H1 (cell line): ENCODE measurements at regions of chr1 and their contacts with region 1.

Region 1: DNA sequence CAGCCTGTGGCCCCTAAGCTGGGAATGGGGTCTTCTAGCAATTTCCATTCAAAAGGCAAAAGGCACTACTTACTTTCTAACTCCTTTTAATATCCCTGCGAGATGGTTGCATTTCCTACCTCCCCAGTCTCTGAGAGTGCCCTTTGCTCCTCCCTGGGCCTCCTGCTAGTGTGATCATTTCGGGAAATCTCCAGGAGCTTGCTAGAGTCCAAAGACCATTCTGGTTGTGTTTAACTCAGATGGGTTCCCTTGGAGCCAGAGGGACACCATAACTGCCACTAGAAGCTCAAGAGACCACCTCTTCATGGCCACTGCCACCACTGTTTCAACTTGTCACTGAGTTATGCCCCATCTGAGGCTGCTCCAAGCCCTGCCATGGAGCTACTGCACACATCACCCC is 34.4 kb upstream of the CYP4B1 start:
- DNase-seq: no peak
- H3K4me3 ChIP-seq: no peak overlapping the region
- H3K27ac ChIP-seq: no peak overlapping the region
- H3K4me1 ChIP-seq: no peaks in the 10 kb centered on the region
- H3K27me3 ChIP-seq: no peaks in the 10 kb centered on the region
- CTCF ChIP-seq: no peak
- EP300 ChIP-seq: no peak
- POLR2A ChIP-seq: no peak
- RAD21 ChIP-seq: no peak

Region 2: DNA sequence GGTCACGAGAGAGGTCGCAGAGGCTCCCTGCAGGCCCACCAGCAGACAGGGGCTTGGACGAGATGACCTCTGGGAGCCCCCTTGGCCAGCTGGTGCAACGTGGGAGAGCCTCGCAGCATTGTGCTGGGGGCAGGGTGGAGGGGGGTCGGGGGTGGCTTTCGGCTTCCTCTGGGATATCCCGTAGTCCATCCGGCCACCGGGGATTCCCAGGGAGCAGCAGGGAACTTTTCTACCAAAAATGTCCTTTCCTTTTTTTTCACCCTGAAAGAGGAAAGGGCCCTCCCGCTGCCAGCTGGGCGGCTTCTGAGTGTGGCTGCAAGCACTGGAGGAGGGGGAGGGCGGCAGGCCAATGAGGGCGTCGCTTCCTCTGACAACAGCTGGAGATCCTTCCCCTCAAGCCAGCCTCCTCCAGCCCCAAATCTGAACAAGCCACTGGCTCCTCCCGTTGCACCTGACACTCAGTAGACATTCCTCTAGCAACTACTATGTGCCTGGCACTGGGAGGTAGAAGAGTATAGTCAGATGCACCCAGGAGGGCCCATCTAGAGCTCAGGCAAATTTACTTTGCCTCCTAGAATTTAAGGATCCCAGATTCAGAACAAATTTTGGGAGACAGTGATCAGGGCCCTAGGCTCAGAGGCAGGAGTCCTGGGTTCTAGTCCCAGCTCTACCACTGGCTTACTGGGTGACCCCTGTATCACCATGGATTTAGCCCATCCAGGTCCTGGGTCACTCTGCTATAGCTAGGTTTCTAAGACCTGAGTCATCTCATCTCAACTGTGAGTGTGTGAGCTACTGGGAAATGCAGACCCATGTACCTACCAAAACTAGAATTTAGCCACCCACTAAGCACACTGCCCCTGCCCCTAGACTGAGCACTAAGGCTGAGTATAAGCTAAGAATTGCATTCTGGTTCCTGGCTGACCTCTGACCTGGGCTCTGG is 150.5 kb before region 1 on chr1:
- CTCF ChIA-PET with region 1: no interaction called
- POLR2A ChIA-PET with region 1: no interaction called
- DNase-seq: peak; percentile 65 to 83
- H3K4me3 ChIP-seq: peak overlapping the region in 1 of 4 experiments; percentile 41; a peak in 2 of 8 replicates
- H3K27ac ChIP-seq: peak overlapping the region; percentile 64; the same call in 1 of the 2 replicates
- H3K4me1 ChIP-seq: peaks cover 11 to 35% (median 24%) of the 10 kb centered on the region in 4 experiments
- H3K27me3 ChIP-seq: peaks cover 0 to 11% (median 9%) of the 10 kb centered on the region in 4 experiments; a peak in 5 of 7 replicates
- CTCF ChIP-seq: no peak
- EP300 ChIP-seq: no peak; a peak in 1 of 3 replicates
- POLR2A ChIP-seq: no peak
- RAD21 ChIP-seq: no peak

Region 3: GRCh38 chr1:46747683-46748288 is 16.6 kb before region 1 on chr1:
- CTCF ChIA-PET with region 1: interaction called, 18 read pairs
- POLR2A ChIA-PET with region 1: no interaction called
- DNase-seq: peak in 1 of 2 experiments; percentile 65
- H3K4me3 ChIP-seq: no peak overlapping the region
- H3K27ac ChIP-seq: no peak overlapping the region
- H3K4me1 ChIP-seq: no peaks in the 10 kb centered on the region
- H3K27me3 ChIP-seq: no peaks in the 10 kb centered on the region
- CTCF ChIP-seq: peak; percentile 62 to 87 (median 87)
- EP300 ChIP-seq: no peak
- POLR2A ChIP-seq: no peak
- RAD21 ChIP-seq: peak; percentile 88 to 92

Region 4: GRCh38 chr1:46806271-46807020 is 42.0 kb after region 1 on chr1:
- CTCF ChIA-PET with region 1: no interaction called
- POLR2A ChIA-PET with region 1: no interaction called
- DNase-seq: no peak
- H3K4me3 ChIP-seq: no peak overlapping the region
- H3K27ac ChIP-seq: no peak overlapping the region
- H3K4me1 ChIP-seq: no peaks in the 10 kb centered on the region
- H3K27me3 ChIP-seq: no peaks in the 10 kb centered on the region; a peak in 1 of 7 replicates
- CTCF ChIP-seq: no peak
- EP300 ChIP-seq: no peak
- POLR2A ChIP-seq: no peak
- RAD21 ChIP-seq: no peak